CD4-positive, alpha-beta T cell (primary cell): ENCODE measurements at regions of chrX and their contacts with region 1.

Region 1: DNA sequence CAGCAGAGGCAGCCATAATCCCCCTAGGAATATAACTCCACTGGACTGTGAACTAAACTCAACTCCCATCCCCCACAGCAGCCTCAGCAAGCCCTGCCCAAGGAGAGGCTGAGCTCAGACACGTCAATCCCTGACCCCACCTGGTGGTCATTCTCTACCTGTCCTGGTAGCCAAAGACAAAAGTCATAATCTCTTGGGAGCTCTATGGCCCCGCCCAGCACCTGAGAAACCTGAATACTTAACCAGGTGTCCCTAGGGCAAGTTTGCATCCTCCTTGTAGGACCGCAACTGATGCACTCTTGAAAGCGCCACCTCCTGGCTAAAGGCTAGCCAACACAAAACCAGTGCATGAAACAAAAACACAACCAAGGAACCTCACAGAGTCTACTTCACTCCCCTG is 18.4 kb downstream of the CT47B1 start:
- DNase-seq: peak in 2 of 14 experiments; percentile 0 to 6
- ATAC-seq: no peak
- H3K4me3 ChIP-seq: no peak overlapping the region
- H3K4me3 Mint-ChIP-seq: no peak overlapping the region
- H3K27ac ChIP-seq: no peak overlapping the region
- H3K27ac Mint-ChIP-seq: no peak overlapping the region
- H3K4me1 ChIP-seq: no peaks in the 10 kb centered on the region
- H3K4me1 Mint-ChIP-seq: peaks cover 13% of the 10 kb centered on the region
- H3K27me3 ChIP-seq: no peaks in the 10 kb centered on the region
- H3K27me3 Mint-ChIP-seq: no peaks in the 10 kb centered on the region
- CTCF ChIP-seq: no peak

Region 2: GRCh38 chrX:120840827-120841226 is 16.4 kb before region 1 on chrX:
- CTCF ChIA-PET with region 1: no interaction called
- POLR2A ChIA-PET with region 1: no interaction called
- intact Hi-C with region 1: loop called in 1 of 2 experiments (anchors 1 kb)
- DNase-seq: no peak
- ATAC-seq: no peak
- H3K4me3 ChIP-seq: no peak overlapping the region
- H3K4me3 Mint-ChIP-seq: no peak overlapping the region
- H3K27ac ChIP-seq: no peak overlapping the region
- H3K27ac Mint-ChIP-seq: no peak overlapping the region
- H3K4me1 ChIP-seq: no peaks in the 10 kb centered on the region
- H3K4me1 Mint-ChIP-seq: no peaks in the 10 kb centered on the region
- H3K27me3 ChIP-seq: no peaks in the 10 kb centered on the region
- H3K27me3 Mint-ChIP-seq: no peaks in the 10 kb centered on the region
- CTCF ChIP-seq: no peak

Region 3: GRCh38 chrX:121135488-121136207 is 278.4 kb after region 1 on chrX:
- CTCF ChIA-PET with region 1: no interaction called
- POLR2A ChIA-PET with region 1: no interaction called
- intact Hi-C with region 1: no loop called
- DNase-seq: no peak
- ATAC-seq: no peak
- H3K4me3 ChIP-seq: no peak overlapping the region
- H3K4me3 Mint-ChIP-seq: no peak overlapping the region
- H3K27ac ChIP-seq: no peak overlapping the region
- H3K27ac Mint-ChIP-seq: no peak overlapping the region
- H3K4me1 ChIP-seq: no peaks in the 10 kb centered on the region
- H3K4me1 Mint-ChIP-seq: no peaks in the 10 kb centered on the region
- H3K27me3 ChIP-seq: no peaks in the 10 kb centered on the region
- H3K27me3 Mint-ChIP-seq: no peaks in the 10 kb centered on the region
- CTCF ChIP-seq: no peak

Region 4: DNA sequence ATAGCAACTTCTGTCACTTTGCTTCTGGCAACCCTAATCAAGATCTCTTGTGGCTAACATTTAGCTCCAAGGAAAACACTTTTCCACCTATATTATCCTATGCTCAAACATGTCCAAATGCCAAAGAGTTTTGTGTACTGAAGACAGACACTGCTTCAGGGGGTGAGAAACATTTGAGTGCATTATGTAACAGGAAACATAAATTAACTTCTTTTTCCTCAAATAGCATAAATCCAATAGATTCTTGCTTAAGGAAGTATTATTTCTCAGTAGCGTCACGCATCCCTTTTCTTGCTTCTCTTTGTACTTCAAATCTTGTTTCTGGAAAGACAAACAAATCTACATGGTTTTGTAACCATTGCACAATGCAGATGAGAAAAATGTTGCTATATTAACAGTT is 1029.3 kb after region 1 on chrX:
- CTCF ChIA-PET with region 1: no interaction called
- POLR2A ChIA-PET with region 1: no interaction called
- intact Hi-C with region 1: no loop called
- DNase-seq: no peak
- ATAC-seq: no peak
- H3K4me3 ChIP-seq: no peak overlapping the region
- H3K4me3 Mint-ChIP-seq: no peak overlapping the region
- H3K27ac ChIP-seq: no peak overlapping the region
- H3K27ac Mint-ChIP-seq: no peak overlapping the region
- H3K4me1 ChIP-seq: no peaks in the 10 kb centered on the region
- H3K4me1 Mint-ChIP-seq: no peaks in the 10 kb centered on the region
- H3K27me3 ChIP-seq: no peaks in the 10 kb centered on the region
- H3K27me3 Mint-ChIP-seq: no peaks in the 10 kb centered on the region
- CTCF ChIP-seq: no peak